AG04450 (cell line): ENCODE measurements at regions of chr2 and their contacts with region 1.

Region 1: DNA sequence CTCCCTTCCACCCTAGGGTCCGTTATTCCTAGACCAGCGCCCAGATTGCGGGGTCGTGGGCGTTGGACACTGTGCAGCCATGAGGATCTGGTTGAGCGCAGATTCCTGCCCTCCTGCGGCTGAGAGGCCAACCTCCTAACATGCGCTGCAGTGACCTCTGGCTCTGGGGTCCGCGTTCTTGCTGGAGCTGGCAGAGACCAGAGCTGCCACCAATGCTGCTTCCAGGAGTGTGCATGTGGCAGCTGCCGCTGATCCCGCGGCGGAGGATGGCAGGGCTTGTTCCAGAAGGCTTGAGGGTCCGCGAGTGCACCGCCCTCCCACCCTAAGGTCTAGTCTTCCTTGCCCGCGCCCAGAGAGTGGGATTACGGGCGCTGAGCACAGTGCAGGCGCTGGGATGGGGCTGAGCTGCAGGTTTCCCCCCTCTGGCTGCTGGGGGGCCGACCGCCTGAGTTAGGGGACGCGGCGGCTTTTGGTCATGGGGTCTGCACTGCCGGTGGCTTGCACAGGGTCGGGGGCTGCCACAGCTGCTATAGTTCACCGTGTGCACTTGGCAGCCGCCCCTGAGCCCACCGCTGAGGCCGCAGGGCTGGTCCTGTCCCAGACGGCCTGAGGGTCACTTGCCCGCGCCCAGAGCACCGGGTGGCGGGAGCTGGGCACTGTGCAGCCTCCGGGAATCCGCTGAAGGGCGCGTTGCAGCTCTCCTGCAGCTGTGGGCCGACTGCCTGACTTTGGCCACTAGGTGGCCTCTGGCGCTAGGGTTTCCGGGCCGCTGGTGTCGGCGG is 145.9 kb downstream of the CCDC74A start:
- DNase-seq: no peak
- H3K4me3 ChIP-seq: peak overlapping the region; percentile 50
- H3K27ac ChIP-seq: no peak overlapping the region
- H3K27me3 ChIP-seq: no peaks in the 10 kb centered on the region
- CTCF ChIP-seq: peak; percentile 79

Region 2: DNA sequence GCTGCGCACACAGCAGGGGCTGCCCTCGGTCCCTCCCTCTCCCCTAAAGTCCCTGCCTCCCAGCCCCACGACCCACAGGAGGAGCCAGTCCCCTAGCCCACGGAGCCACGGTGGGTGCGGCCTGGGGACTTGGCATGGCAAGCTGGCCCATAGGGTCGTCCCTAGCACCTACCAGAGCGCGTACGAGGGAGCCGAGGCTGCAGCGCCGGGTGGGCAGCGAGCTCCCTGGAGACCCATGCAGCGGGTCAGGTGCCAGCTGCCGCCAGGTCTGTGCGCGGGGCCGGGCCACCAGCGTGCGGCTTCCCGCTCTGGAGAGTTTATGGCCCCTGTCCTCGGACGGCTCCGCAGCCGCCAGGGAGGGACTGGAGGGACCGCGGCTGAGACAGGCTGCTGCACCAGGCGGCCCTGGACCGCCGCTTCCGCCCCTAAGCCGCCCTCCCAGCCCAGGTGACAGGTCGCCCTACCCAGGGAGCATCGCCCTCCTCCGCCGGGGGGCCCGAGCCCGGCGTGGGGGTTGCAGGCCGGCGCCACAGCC is 127.7 kb after region 1 on chr2:
- CTCF ChIA-PET with region 1: interaction called, 14 read pairs
- POLR2A ChIA-PET with region 1: no interaction called
- DNase-seq: no peak
- H3K4me3 ChIP-seq: no peak overlapping the region
- H3K27ac ChIP-seq: no peak overlapping the region
- H3K27me3 ChIP-seq: no peaks in the 10 kb centered on the region
- CTCF ChIP-seq: no peak